ENCODE measurements at regions of chr22 and their contacts with region 1.

Region 1: DNA sequence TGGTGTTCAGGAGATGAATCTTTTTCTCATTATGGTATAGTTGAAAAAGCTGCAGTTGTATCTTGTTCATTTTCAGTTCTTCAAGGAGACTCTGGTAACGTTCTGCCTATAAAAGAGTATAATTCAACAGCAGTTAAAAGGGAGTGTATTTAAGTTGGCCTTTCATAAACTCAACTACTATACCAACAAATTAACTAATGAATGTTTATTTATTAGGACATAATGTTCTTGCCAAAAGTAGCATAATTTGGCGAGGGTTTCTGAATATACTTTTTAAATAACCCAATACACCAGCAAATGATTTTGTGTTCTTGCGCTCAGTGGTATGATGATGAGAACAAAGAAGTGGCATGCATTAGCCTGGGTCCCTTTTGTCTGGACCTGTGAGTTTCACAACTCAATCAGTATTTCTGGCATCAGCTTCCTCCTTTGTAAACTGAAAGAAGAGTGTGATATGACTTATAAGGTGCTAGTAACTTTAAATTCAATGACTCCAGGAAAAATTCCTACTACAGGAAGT is 10.9 kb downstream of the SMC1B start:
- DNase-seq: no peak
- ATAC-seq: no peak
- H3K4me3 ChIP-seq: no peak overlapping the region
- H3K4me3 Mint-ChIP-seq: no peak overlapping the region
- H3K27ac ChIP-seq: no peak overlapping the region
- H3K27ac Mint-ChIP-seq: no peak overlapping the region
- H3K4me1 ChIP-seq: no peaks in the 10 kb centered on the region
- H3K4me1 Mint-ChIP-seq: no peaks in the 10 kb centered on the region
- H3K27me3 ChIP-seq: peaks cover 0 to 6% of the 10 kb centered on the region in 2 experiments
- H3K27me3 Mint-ChIP-seq: peaks cover 0 to 2% of the 10 kb centered on the region in 2 donors

Region 2: GRCh38 chr22:45336971-45337431 is 65.5 kb before region 1 on chr22:
- CTCF ChIA-PET with region 1: no interaction called
- POLR2A ChIA-PET with region 1: interaction called in 1 of 2 experiments, 14 read pairs
- DNase-seq: peak in 23 of 35 experiments; percentile 16 to 68 (median 48)
- ATAC-seq: peak; percentile 26 to 65 (median 46)
- H3K4me3 ChIP-seq: no peak overlapping the region
- H3K4me3 Mint-ChIP-seq: peak overlapping the region in 1 of 3 donors; percentile 58
- H3K27ac ChIP-seq: no peak overlapping the region
- H3K27ac Mint-ChIP-seq: peak overlapping the region; percentile 70 to 91
- H3K4me1 ChIP-seq: peaks cover 22 to 23% of the 10 kb centered on the region in 2 experiments
- H3K4me1 Mint-ChIP-seq: peaks cover 26 to 66% (median 38%) of the 10 kb centered on the region in 3 donors
- H3K27me3 ChIP-seq: no peaks in the 10 kb centered on the region
- H3K27me3 Mint-ChIP-seq: no peaks in the 10 kb centered on the region

Region 3: GRCh38 chr22:45389521-45389920 is 13.0 kb before region 1 on chr22:
- CTCF ChIA-PET with region 1: no interaction called
- POLR2A ChIA-PET with region 1: no interaction called
- DNase-seq: no peak
- ATAC-seq: no peak
- H3K4me3 ChIP-seq: no peak overlapping the region
- H3K4me3 Mint-ChIP-seq: no peak overlapping the region
- H3K27ac ChIP-seq: no peak overlapping the region
- H3K27ac Mint-ChIP-seq: no peak overlapping the region
- H3K4me1 ChIP-seq: no peaks in the 10 kb centered on the region
- H3K4me1 Mint-ChIP-seq: no peaks in the 10 kb centered on the region
- H3K27me3 ChIP-seq: peaks cover 0 to 4% of the 10 kb centered on the region in 2 experiments
- H3K27me3 Mint-ChIP-seq: peaks cover 0 to 9% of the 10 kb centered on the region in 2 donors

Region 4: GRCh38 chr22:45502215-45503049 is 99.9 kb after region 1 on chr22 and contains the start of gene FBLN1:
- CTCF ChIA-PET with region 1: no interaction called
- POLR2A ChIA-PET with region 1: no interaction called
- DNase-seq: no peak
- ATAC-seq: peak in 1 of 4 experiments; percentile 35
- H3K4me3 ChIP-seq: peak within 1 kb of the TSS in 1 of 2 donors; percentile 44
- H3K4me3 Mint-ChIP-seq: peak within 1 kb of the TSS in 2 of 3 donors; percentile 9 to 41
- H3K27ac ChIP-seq: no peak within 1 kb of the TSS
- H3K27ac Mint-ChIP-seq: peak within 1 kb of the TSS in 1 of 2 donors; percentile 15
- H3K4me1 ChIP-seq: peaks cover 0 to 8% of the 10 kb centered on the region in 2 experiments
- H3K4me1 Mint-ChIP-seq: peaks cover 0 to 3% (median 2%) of the 10 kb centered on the region in 3 donors
- H3K27me3 ChIP-seq: peaks cover 0 to 68% of the 10 kb centered on the region in 2 experiments
- H3K27me3 Mint-ChIP-seq: peaks cover 34 to 51% of the 10 kb centered on the region in 2 donors
- total RNA-seq, gene FBLN1: 0.96 to 1.5 (median 1.0) TPM in 3 of 5 donors, not detected in the others